ENCODE measurements at regions of chr10 and their contacts with region 1.

Region 1: GRCh38 chr10:64449603-64450002 is 928.4 kb downstream of the REEP3 start:
- DNase-seq: no peak
- ATAC-seq: no peak
- H3K4me3 ChIP-seq: no peak overlapping the region
- H3K27ac ChIP-seq: no peak overlapping the region
- H3K4me1 ChIP-seq: no peaks in the 10 kb centered on the region
- H3K27me3 ChIP-seq: no peaks in the 10 kb centered on the region
- CTCF ChIP-seq: no peak
- EP300 ChIP-seq: no peak
- POLR2A ChIP-seq: no peak
- RAD21 ChIP-seq: no peak

Region 2: DNA sequence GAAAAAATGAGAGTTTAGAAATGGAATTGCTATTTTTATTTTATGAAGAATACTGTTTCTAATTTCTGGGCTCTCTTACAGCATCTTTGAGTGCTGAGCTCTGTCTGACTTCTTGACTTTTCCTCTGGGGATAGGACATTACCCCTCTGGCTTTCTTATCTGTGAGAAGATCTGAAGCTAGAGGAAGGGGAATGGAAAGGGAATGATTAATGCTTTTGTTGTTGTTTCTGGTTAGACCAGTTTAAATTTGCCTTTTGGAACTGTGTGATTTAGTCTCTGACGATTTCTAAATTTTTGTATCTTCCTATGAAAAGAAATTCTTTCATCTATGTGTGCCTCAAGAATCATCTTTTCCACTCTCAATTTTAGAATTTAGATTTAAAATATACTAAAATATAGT is 117.0 kb before region 1 on chr10:
- CTCF ChIA-PET with region 1: no interaction called
- POLR2A ChIA-PET with region 1: no interaction called
- RAD21 ChIA-PET with region 1: no interaction called
- SMC1A ChIA-PET with region 1: no interaction called
- in situ Hi-C with region 1: no loop called
- intact Hi-C with region 1: loop called (anchors 5 kb)
- DNase-seq: no peak
- ATAC-seq: no peak
- H3K4me3 ChIP-seq: no peak overlapping the region
- H3K27ac ChIP-seq: no peak overlapping the region
- H3K4me1 ChIP-seq: no peaks in the 10 kb centered on the region
- H3K27me3 ChIP-seq: no peaks in the 10 kb centered on the region
- CTCF ChIP-seq: no peak
- EP300 ChIP-seq: no peak
- POLR2A ChIP-seq: no peak
- RAD21 ChIP-seq: no peak